WTC11 (cell line): ENCODE measurements at regions of chr11 and their contacts with region 1.

Region 1: DNA sequence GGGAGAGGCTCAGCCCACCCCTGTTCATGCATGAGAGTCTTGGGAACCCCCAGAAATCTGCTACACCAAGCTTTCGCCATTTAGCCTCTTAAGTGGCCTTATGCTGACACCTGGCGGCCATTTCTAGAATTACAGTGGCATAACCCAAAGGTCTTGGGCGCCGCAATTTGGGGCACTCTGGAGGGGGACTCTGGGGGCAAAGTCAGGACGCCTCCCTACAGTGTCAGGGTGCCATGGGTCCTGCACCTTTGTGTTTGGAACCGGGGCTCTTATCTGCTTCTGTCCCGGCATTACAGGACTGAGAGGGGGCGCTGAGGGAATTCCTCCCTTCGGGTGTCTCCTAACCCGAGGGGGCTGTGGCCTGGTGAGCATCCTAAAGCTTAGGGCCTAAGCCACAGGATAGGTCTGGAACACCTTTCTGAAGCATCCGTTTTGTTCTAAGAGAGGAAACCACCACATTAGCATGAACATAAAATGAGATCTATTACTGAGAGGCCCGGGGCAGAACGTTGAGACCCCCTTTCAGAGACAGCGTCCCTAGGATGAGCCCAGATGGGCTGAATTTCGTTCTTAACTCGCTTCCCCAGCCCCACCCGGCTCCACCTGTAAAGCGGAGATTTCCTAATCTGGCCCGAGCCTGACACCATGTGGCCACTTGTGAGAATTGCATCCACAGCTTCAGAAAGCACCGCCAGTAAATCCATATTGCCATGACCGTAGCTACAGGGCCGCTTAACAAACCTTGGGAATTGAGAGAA is 9.3 kb downstream of the INS start:
- DNase-seq: peak; percentile 91
- ATAC-seq: peak; percentile 50
- H3K4me3 Mint-ChIP-seq: no peak overlapping the region
- H3K27ac Mint-ChIP-seq: no peak overlapping the region
- H3K4me1 Mint-ChIP-seq: peaks cover 13% of the 10 kb centered on the region
- H3K27me3 Mint-ChIP-seq: peaks cover 45% of the 10 kb centered on the region
- CTCF ChIP-seq: peak; percentile 89

Region 2: DNA sequence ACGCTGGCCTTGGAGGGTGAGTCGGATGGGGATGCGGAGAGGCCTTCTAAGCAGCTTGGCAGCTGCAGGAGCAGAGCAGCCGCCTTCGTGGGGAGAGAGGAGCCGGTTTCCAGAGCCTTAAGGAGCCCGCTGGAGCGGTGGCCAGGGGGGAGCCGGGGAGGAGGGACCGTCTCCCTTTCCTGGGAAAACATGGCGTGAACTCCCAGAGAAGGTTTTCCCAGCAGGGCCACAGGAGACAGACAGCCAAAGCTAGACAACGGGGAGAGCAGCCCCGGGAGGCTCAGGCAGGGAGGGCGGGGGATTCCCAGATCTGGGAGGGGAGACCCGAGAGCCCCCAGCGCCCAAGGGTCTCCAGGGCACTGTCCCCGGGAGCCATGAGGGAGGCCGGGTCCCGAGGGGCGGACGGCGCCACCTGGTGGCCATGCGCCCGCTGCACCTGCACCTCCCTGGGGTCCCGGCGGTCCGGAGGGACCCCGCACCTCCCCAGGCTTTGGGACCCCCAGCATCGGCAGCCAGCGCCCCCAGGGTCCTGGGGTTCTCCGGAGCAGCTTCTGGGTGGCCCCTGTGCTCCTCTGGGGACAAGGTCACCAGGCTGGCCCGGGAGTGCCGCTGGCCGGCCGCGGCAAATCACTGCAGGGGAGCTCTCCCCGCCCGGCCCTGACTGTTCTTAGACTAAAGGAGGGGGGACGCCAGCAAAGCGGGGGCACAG is 319.3 kb before region 1 on chr11:
- CTCF ChIA-PET with region 1: interaction called, 110 read pairs
- POLR2A ChIA-PET with region 1: no interaction called
- DNase-seq: peak; percentile 77
- ATAC-seq: peak; percentile 75
- H3K4me3 Mint-ChIP-seq: peak overlapping the region; percentile 49
- H3K27ac Mint-ChIP-seq: no peak overlapping the region
- H3K4me1 Mint-ChIP-seq: 0 out of 2 replicates have a peak, but pooled peaks cover 2% of the 10 kb centered on the region
- H3K27me3 Mint-ChIP-seq: peaks cover 5% of the 10 kb centered on the region
- CTCF ChIP-seq: peak; percentile 97

Region 3: GRCh38 chr11:1876361-1877063 is 275.2 kb before region 1 on chr11:
- CTCF ChIA-PET with region 1: interaction called, 159 read pairs
- POLR2A ChIA-PET with region 1: no interaction called
- DNase-seq: peak; percentile 77
- ATAC-seq: peak; percentile 85
- H3K4me3 Mint-ChIP-seq: no peak overlapping the region
- H3K27ac Mint-ChIP-seq: no peak overlapping the region
- H3K4me1 Mint-ChIP-seq: 0 out of 2 replicates have a peak, but pooled peaks cover 3% of the 10 kb centered on the region
- H3K27me3 Mint-ChIP-seq: no peaks in the 10 kb centered on the region; the same call in 1 of the 2 replicates
- CTCF ChIP-seq: peak; percentile 21; the same call in 1 of the 2 replicates

Region 4: DNA sequence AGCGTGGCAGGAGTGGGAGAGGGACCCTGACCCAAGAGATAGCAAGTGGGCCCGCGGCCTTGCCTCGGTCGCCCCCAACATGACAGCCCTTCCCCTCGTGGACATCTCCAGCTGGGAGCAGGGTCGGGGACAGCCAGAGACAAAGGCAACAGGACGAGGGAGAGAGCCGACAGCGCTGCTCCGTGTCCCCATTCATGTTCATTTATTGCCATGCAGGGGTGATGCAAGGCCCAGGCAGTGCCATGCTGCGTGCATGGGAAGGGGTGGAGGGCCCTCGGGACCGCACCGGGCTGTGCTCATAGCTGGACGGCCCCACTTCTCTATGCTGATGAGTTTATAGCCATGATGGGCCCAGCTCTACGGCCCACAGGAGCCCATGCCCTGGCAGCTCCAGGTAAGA is 191.9 kb before region 1 on chr11:
- CTCF ChIA-PET with region 1: interaction called, 41 read pairs
- POLR2A ChIA-PET with region 1: no interaction called
- DNase-seq: no peak
- ATAC-seq: no peak
- H3K4me3 Mint-ChIP-seq: no peak overlapping the region
- H3K27ac Mint-ChIP-seq: no peak overlapping the region
- H3K4me1 Mint-ChIP-seq: no peaks in the 10 kb centered on the region
- H3K27me3 Mint-ChIP-seq: no peaks in the 10 kb centered on the region
- CTCF ChIP-seq: no peak

Region 5: GRCh38 chr11:2015025-2015424 is 136.7 kb before region 1 on chr11:
- CTCF ChIA-PET with region 1: interaction called, 761 read pairs
- POLR2A ChIA-PET with region 1: no interaction called
- DNase-seq: no peak
- ATAC-seq: peak; percentile 34; the same call in 1 of the 2 replicates
- H3K4me3 Mint-ChIP-seq: no peak overlapping the region
- H3K27ac Mint-ChIP-seq: no peak overlapping the region
- H3K4me1 Mint-ChIP-seq: no peaks in the 10 kb centered on the region
- H3K27me3 Mint-ChIP-seq: no peaks in the 10 kb centered on the region
- CTCF ChIP-seq: no peak

Region 6: DNA sequence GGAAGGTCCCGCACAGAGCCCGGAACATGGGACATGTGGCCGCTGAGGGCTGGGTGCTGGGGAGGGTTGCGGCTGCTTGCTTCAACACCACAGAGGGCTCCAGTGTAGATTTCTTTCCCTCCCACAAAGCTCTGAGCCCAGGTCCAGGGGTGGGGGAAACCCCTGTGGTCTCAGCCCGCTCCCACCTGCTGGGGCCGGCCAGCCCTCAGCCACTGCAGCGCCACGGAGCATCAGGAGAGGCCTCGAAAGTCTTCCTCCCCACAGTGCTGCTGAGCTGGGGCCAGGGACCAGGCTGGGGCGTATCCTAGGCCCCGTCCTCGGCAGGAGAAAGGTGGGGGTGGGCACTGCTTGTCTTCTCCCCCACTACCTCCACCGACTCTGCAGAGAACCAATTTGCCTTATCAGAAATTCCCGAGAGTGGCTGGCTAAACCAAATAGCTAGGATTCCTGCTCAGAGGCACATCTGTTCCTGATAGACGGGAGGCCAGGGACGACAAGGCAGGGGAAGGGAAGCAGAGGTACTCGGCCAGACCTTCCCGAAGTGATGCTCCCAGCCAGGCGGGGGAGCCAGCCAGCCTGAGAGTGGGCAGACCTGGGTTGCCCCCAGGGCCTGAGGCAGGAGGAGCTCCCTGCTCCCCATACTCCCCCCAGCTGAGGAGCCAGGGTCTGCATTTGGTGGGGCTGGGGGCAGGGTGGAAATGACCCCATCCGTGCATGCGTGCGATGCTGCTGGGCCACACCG is 31.1 kb before region 1 on chr11:
- CTCF ChIA-PET with region 1: interaction called, 23 read pairs
- POLR2A ChIA-PET with region 1: no interaction called
- DNase-seq: no peak
- ATAC-seq: peak; percentile 75
- H3K4me3 Mint-ChIP-seq: no peak overlapping the region
- H3K27ac Mint-ChIP-seq: no peak overlapping the region
- H3K4me1 Mint-ChIP-seq: no peaks in the 10 kb centered on the region; the same call in 1 of the 2 replicates
- H3K27me3 Mint-ChIP-seq: peaks cover 17% of the 10 kb centered on the region
- CTCF ChIP-seq: no peak

Region 7: GRCh38 chr11:2206011-2206690 is 54.5 kb after region 1 on chr11:
- CTCF ChIA-PET with region 1: no interaction called
- POLR2A ChIA-PET with region 1: no interaction called
- DNase-seq: peak; percentile 4
- ATAC-seq: no peak
- H3K4me3 Mint-ChIP-seq: no peak overlapping the region
- H3K27ac Mint-ChIP-seq: no peak overlapping the region
- H3K4me1 Mint-ChIP-seq: no peaks in the 10 kb centered on the region
- H3K27me3 Mint-ChIP-seq: peaks cover 4% of the 10 kb centered on the region; the same call in 1 of the 2 replicates
- CTCF ChIP-seq: no peak